ENCODE measurements at regions of chr15 and their contacts with region 1.

Region 1: GRCh38 chr15:31458591-31459399 is 132.2 kb downstream of the KLF13 start:
- DNase-seq: no peak
- H3K4me3 ChIP-seq: no peak overlapping the region
- H3K27ac ChIP-seq: no peak overlapping the region
- H3K4me1 ChIP-seq: peaks cover 0 to 6% (median 0%) of the 10 kb centered on the region in 4 experiments; a peak in 4 of 7 replicates
- H3K27me3 ChIP-seq: no peaks in the 10 kb centered on the region
- CTCF ChIP-seq: no peak
- EP300 ChIP-seq: no peak
- POLR2A ChIP-seq: no peak
- RAD21 ChIP-seq: no peak

Region 2: DNA sequence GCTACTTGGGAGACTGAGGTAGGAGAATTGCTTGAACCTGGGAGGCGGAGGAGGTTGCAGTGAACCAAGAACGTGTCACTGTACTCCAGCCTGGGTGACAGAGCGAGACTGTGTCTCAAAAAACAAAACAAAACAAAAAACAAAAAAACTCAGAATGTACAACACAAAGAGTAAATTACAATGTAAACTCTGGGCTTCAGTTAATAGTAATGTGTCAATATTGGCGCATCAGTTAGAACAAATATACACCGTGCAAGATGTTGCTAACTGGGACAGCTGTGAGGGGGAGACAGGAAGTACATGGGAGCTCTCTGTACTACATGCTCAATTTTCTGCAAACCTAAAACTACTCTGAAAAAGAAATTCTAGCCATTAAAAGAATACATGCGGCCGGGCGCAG is 333.7 kb before region 1 on chr15:
- CTCF ChIA-PET with region 1: no interaction called
- POLR2A ChIA-PET with region 1: no interaction called
- DNase-seq: no peak
- H3K4me3 ChIP-seq: no peak overlapping the region
- H3K27ac ChIP-seq: no peak overlapping the region
- H3K4me1 ChIP-seq: no peaks in the 10 kb centered on the region; a peak in 3 of 7 replicates
- H3K27me3 ChIP-seq: no peaks in the 10 kb centered on the region
- CTCF ChIP-seq: no peak
- EP300 ChIP-seq: no peak
- POLR2A ChIP-seq: no peak
- RAD21 ChIP-seq: no peak

Region 3: DNA sequence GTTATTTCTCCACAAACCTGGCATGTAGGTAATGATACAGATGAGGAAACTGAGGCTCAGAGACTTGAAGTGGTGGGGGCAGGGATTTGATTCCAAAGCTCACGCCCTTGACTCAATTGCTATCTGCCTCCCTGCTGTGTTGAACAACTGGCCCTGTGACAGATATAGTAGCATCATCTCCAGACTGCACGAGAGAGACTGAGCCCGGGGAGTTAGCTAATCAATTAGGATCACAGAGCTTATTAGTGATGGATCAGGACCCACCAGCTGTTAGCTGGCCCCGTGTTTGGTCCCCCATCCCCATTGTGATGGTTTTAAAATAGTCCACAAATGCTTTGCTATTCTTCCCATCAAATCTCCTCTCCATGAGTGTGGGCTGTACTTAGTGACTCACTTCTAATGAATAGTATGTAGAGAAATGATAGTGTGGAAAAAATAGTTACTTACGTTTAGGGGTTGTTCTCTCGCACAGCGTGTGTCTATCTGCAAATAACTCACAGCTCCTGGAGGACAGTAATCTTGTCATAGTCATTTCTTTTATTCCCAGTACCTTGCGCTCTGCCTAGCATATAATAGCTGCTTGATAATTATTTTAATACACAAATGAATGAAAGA is 206.5 kb before region 1 on chr15:
- CTCF ChIA-PET with region 1: no interaction called
- POLR2A ChIA-PET with region 1: no interaction called
- DNase-seq: no peak
- H3K4me3 ChIP-seq: no peak overlapping the region
- H3K27ac ChIP-seq: no peak overlapping the region
- H3K4me1 ChIP-seq: no peaks in the 10 kb centered on the region
- H3K27me3 ChIP-seq: no peaks in the 10 kb centered on the region; a peak in 1 of 7 replicates
- CTCF ChIP-seq: no peak
- EP300 ChIP-seq: no peak
- POLR2A ChIP-seq: no peak
- RAD21 ChIP-seq: no peak

Region 4: GRCh38 chr15:31365655-31366127 is 93.1 kb before region 1 on chr15:
- CTCF ChIA-PET with region 1: interaction called, 10 read pairs
- POLR2A ChIA-PET with region 1: no interaction called
- DNase-seq: peak; percentile 44 to 78
- H3K4me3 ChIP-seq: peak overlapping the region in 1 of 4 experiments; percentile 32; a peak in 1 of 8 replicates
- H3K27ac ChIP-seq: no peak overlapping the region
- H3K4me1 ChIP-seq: peaks cover 8 to 53% (median 45%) of the 10 kb centered on the region in 4 experiments
- H3K27me3 ChIP-seq: no peaks in the 10 kb centered on the region
- CTCF ChIP-seq: peak; percentile 37 to 48 (median 44)
- EP300 ChIP-seq: no peak
- POLR2A ChIP-seq: no peak
- RAD21 ChIP-seq: peak; percentile 13 to 50; a peak in 3 of 4 replicates

Region 5: GRCh38 chr15:31472636-31473384 is 14.0 kb after region 1 on chr15:
- CTCF ChIA-PET with region 1: interaction called, 98 read pairs
- POLR2A ChIA-PET with region 1: no interaction called
- DNase-seq: no peak
- H3K4me3 ChIP-seq: no peak overlapping the region
- H3K27ac ChIP-seq: no peak overlapping the region
- H3K4me1 ChIP-seq: peaks cover 0 to 5% (median 0%) of the 10 kb centered on the region in 4 experiments; a peak in 1 of 7 replicates
- H3K27me3 ChIP-seq: no peaks in the 10 kb centered on the region; a peak in 1 of 7 replicates
- CTCF ChIP-seq: no peak
- EP300 ChIP-seq: no peak
- POLR2A ChIP-seq: no peak
- RAD21 ChIP-seq: no peak